Calu3 (cell line): ENCODE measurements at regions of chr18 and their contacts with region 1.

Region 1: DNA sequence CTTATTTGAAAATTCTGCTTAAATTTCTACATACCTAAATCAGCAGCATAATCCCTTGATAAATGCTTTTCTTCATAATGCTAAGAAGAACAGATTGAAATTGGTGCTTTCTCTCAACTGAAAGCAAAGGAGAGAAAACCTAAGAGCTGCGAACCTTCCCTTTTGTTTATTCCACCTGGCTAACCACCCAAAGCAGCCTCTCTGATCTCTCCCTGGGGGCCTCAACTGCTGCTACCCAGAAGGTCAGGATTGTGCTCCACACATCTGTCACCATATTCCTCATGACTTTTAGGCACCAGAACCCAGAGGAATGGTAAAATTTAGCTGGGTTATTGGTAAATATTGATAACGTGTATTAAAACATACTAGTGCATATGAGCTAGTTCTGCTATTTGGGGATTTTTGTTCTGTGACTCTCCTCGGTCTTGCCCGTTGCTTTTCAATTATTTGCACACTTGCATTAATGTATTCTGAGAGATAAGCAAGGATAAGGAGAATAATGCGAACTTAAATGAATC is 334.1 kb downstream of the RIT2 start:
- DNase-seq: no peak
- H3K4me3 Mint-ChIP-seq: no peak overlapping the region
- H3K27ac Mint-ChIP-seq: no peak overlapping the region
- H3K4me1 Mint-ChIP-seq: peaks cover 31% of the 10 kb centered on the region
- H3K27me3 Mint-ChIP-seq: no peaks in the 10 kb centered on the region
- CTCF ChIP-seq: no peak

Region 2: DNA sequence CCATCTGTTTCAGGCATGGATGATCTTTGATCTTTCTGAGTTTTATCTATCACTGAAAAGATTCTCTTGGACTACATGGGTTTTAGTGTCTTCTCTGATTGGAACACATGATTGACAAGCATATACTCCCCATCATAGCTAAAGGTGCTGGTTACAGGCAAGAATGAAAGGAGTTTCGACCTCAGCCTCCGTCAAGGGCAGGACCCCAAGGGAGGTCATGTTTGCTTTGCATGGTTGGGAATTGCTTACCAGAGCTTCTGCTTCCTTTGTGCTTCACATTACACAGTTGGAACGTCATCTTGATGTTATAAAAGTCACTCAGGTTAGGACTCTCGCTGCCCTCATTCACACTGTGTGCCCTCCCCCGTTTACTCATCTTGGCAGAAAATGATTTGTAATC is 538.6 kb before region 1 on chr18:
- CTCF ChIA-PET with region 1: no interaction called
- intact Hi-C with region 1: no loop called
- DNase-seq: no peak
- H3K4me3 Mint-ChIP-seq: no peak overlapping the region
- H3K27ac Mint-ChIP-seq: no peak overlapping the region
- H3K4me1 Mint-ChIP-seq: no peaks in the 10 kb centered on the region
- H3K27me3 Mint-ChIP-seq: no peaks in the 10 kb centered on the region
- CTCF ChIP-seq: no peak

Region 3: GRCh38 chr18:42480441-42480840 is 300.9 kb before region 1 on chr18:
- CTCF ChIA-PET with region 1: no interaction called
- intact Hi-C with region 1: no loop called
- DNase-seq: no peak
- H3K4me3 Mint-ChIP-seq: no peak overlapping the region
- H3K27ac Mint-ChIP-seq: no peak overlapping the region
- H3K4me1 Mint-ChIP-seq: no peaks in the 10 kb centered on the region
- H3K27me3 Mint-ChIP-seq: no peaks in the 10 kb centered on the region
- CTCF ChIP-seq: no peak

Region 4: DNA sequence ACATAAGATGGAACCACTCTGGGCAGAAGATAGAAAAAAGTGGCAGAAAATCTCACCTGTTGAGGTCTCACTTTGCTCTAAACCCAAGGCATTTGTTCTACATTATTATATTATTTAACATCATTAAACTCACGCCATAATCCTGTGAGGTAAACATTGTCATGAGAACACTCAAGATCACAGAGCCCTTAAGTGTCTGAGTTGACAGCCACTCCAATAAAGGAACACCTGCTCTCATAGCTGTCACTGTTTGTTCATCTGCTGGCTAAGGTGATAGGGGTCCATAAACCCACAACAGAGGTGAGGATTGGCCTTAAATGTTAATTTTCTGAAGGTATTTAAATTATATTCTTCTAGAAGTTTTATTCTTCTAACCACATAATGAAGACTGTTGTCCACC is 105.5 kb before region 1 on chr18:
- CTCF ChIA-PET with region 1: no interaction called
- intact Hi-C with region 1: no loop called
- DNase-seq: no peak
- H3K4me3 Mint-ChIP-seq: no peak overlapping the region
- H3K27ac Mint-ChIP-seq: no peak overlapping the region
- H3K4me1 Mint-ChIP-seq: no peaks in the 10 kb centered on the region
- H3K27me3 Mint-ChIP-seq: no peaks in the 10 kb centered on the region
- CTCF ChIP-seq: no peak

Region 5: DNA sequence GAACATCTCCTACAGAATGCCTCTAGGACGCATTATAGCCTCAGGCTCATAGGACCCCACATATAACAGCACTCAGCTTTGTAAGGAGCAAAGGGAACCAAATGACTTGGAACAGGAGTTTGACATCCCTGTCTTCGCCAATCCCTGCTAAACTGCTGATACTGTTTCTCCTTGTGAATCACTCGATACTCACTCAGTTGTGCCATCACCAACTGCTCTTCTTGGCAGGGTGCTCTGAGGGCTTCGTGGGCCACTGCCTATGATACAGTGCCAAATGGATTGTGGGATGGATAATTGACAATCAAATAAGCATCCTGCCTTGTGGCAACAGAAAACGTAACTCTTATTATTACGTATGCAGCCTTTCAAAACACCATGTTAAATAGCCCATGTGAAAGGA is 62.1 kb before region 1 on chr18:
- CTCF ChIA-PET with region 1: no interaction called
- intact Hi-C with region 1: no loop called
- DNase-seq: no peak
- H3K4me3 Mint-ChIP-seq: no peak overlapping the region
- H3K27ac Mint-ChIP-seq: no peak overlapping the region
- H3K4me1 Mint-ChIP-seq: no peaks in the 10 kb centered on the region
- H3K27me3 Mint-ChIP-seq: no peaks in the 10 kb centered on the region
- CTCF ChIP-seq: no peak

Region 6: GRCh38 chr18:42893977-42894376 is 112.6 kb after region 1 on chr18:
- CTCF ChIA-PET with region 1: no interaction called
- intact Hi-C with region 1: loop called (anchors 10 kb)
- DNase-seq: no peak
- H3K4me3 Mint-ChIP-seq: no peak overlapping the region
- H3K27ac Mint-ChIP-seq: no peak overlapping the region
- H3K4me1 Mint-ChIP-seq: peaks cover 33% of the 10 kb centered on the region
- H3K27me3 Mint-ChIP-seq: no peaks in the 10 kb centered on the region
- CTCF ChIP-seq: no peak